Endothelial cell of umbilical vein (primary cell): ENCODE measurements at regions of chr2 and their contacts with region 1.

Region 1: GRCh38 chr2:45567974-45568789 is 42.9 kb downstream of the SRBD1 start:
- DNase-seq: peak; percentile 81
- H3K4me3 ChIP-seq: peak overlapping the region in 2 of 3 experiments; percentile 7 to 56
- H3K27ac ChIP-seq: peak overlapping the region; percentile 84
- H3K4me1 ChIP-seq: peaks cover 34% of the 10 kb centered on the region
- H3K27me3 ChIP-seq: no peaks in the 10 kb centered on the region
- CTCF ChIP-seq: no peak
- POLR2A ChIP-seq: no peak

Region 2: DNA sequence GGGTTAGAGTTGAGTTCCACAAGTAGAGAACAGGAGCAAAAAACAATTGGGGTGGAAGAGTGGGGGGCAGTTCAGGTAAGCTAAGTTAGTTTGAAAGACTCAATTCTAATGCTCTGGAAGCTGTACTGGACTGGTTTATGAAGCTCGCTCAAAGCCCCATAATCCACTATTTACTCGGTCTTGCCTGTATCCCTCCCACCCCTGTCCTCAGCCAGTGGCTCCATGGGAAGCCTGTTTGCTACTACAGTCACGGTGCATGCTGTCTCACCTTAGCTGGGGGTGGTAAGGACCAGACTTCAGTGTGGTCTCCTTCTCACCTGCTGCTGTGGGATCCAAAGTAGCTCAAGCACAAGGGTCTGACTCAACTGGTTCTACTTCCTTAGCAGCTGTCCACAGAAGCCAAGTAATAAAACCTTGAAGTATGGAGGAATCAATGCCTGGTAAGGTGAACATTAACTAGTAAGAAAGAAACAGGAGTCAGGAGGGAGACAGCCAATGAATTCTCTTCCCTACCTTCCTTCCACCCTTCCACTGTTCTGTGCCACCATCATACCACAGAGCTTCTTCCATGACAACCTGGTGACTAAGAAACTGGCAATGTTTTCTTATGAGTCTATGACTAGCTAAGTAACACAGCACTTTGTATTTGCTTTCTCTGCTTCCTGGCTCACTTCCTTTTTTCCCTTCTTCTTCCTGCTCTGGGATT is 187.9 kb before region 1 on chr2:
- CTCF ChIA-PET with region 1: no interaction called
- POLR2A ChIA-PET with region 1: no interaction called
- dilution Hi-C with region 1: no loop called
- intact Hi-C with region 1: no loop called
- DNase-seq: peak; percentile 57
- H3K4me3 ChIP-seq: no peak overlapping the region
- H3K27ac ChIP-seq: peak overlapping the region; percentile 72
- H3K4me1 ChIP-seq: peaks cover 31% of the 10 kb centered on the region
- H3K27me3 ChIP-seq: no peaks in the 10 kb centered on the region
- CTCF ChIP-seq: no peak
- POLR2A ChIP-seq: no peak

Region 3: GRCh38 chr2:45510701-45511420 is 57.3 kb before region 1 on chr2:
- CTCF ChIA-PET with region 1: interaction called, 4 read pairs
- POLR2A ChIA-PET with region 1: no interaction called
- dilution Hi-C with region 1: no loop called
- intact Hi-C with region 1: loop called (anchors 5 kb)
- DNase-seq: peak; percentile 77
- H3K4me3 ChIP-seq: no peak overlapping the region
- H3K27ac ChIP-seq: no peak overlapping the region
- H3K4me1 ChIP-seq: peaks cover 10% of the 10 kb centered on the region
- H3K27me3 ChIP-seq: no peaks in the 10 kb centered on the region
- CTCF ChIP-seq: no peak
- POLR2A ChIP-seq: no peak

Region 4: DNA sequence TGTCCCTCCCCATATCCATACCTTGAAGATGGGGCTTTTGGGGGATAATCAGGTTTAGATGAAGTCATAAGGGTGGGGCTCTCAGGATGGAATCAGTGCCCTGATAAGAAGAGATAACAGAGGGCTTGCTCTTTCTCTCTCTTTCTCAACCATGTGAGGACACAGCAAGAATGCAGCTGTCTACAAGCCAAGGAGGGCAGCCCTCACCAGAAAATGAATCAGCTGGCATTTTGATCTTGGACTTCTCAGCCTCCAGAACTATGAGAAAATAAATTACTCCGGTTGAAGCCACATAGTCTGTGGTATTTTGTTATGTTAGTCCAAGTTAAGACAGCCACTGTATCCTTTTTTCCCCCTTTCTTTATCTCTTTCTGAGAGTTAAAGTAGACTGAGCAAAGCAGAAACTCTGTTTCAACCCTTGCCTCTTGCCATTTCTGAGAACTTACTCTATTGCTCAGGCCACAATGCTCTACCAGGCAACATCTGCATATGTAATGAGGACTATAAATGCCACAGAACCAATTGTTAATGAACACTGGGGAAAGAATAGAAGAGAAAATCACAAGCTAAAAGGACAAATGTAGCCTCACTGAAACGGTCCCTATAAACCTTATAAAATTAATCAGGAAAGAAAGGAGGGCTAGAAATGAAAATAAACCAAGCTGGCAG is 14.0 kb before region 1 on chr2:
- CTCF ChIA-PET with region 1: interaction called, 11 read pairs
- POLR2A ChIA-PET with region 1: no interaction called
- dilution Hi-C with region 1: no loop called
- intact Hi-C with region 1: no loop called
- DNase-seq: no peak
- H3K4me3 ChIP-seq: no peak overlapping the region
- H3K27ac ChIP-seq: no peak overlapping the region
- H3K4me1 ChIP-seq: no peaks in the 10 kb centered on the region
- H3K27me3 ChIP-seq: no peaks in the 10 kb centered on the region
- CTCF ChIP-seq: no peak
- POLR2A ChIP-seq: no peak

Region 5: GRCh38 chr2:45578056-45578809 is 10.1 kb after region 1 on chr2:
- CTCF ChIA-PET with region 1: interaction called, 17 read pairs
- POLR2A ChIA-PET with region 1: no interaction called
- dilution Hi-C with region 1: no loop called
- intact Hi-C with region 1: no loop called
- DNase-seq: peak; percentile 67
- H3K4me3 ChIP-seq: no peak overlapping the region
- H3K27ac ChIP-seq: no peak overlapping the region
- H3K4me1 ChIP-seq: no peaks in the 10 kb centered on the region
- H3K27me3 ChIP-seq: no peaks in the 10 kb centered on the region
- CTCF ChIP-seq: peak; percentile 47 to 57
- POLR2A ChIP-seq: no peak

Region 6: DNA sequence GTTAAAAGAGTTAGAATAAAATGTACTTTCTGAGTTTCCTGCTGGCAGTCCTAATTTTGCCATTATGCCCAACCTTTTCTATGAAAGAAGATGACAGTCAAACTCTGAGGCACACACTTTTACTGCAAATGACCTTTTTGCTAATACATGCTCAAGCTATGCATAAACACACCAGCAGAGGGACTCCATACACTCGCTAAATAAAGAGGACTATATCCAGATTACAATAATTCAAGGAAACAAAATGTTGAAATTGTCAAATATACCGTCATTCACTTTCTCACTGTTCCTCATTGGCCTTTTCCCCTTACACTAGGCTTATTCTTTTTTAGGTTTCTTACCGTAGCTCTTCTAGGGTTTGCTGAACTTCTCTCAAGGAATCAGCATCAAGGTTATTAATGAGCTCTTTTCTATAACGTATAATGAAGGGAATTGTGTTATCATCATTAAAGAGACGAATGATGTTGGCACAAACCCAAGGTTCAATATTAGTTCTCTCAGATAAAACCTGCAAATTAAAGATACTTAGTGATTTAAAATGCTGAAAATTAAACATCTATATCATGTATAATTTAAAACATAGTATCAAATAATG is 17.2 kb after region 1 on chr2:
- CTCF ChIA-PET with region 1: interaction called, 10 read pairs
- POLR2A ChIA-PET with region 1: no interaction called
- dilution Hi-C with region 1: no loop called
- intact Hi-C with region 1: no loop called
- DNase-seq: peak; percentile 74
- H3K4me3 ChIP-seq: no peak overlapping the region
- H3K27ac ChIP-seq: no peak overlapping the region
- H3K4me1 ChIP-seq: peaks cover 3% of the 10 kb centered on the region
- H3K27me3 ChIP-seq: no peaks in the 10 kb centered on the region
- CTCF ChIP-seq: peak; percentile 58 to 59
- POLR2A ChIP-seq: no peak